Psoas muscle (tissue), 8 donors: ENCODE measurements at regions of chr10 and their contacts with region 1.

Region 1: GRCh38 chr10:77485847-77486246 is 151.8 kb downstream of the KCNMA1 start:
- DNase-seq: no peak
- ATAC-seq: peak in 2 of 4 donors; percentile 34 to 35
- H3K4me3 ChIP-seq: no peak overlapping the region
- H3K27ac ChIP-seq: no peak overlapping the region
- H3K4me1 ChIP-seq: peaks cover 8% of the 10 kb centered on the region
- H3K27me3 ChIP-seq: no peaks in the 10 kb centered on the region
- CTCF ChIP-seq: no peak

Region 2: GRCh38 chr10:77555591-77556212 is 69.9 kb after region 1 on chr10:
- intact Hi-C with region 1: no loop called
- DNase-seq: no peak
- ATAC-seq: peak; percentile 49 to 84 (median 71)
- H3K4me3 ChIP-seq: no peak overlapping the region
- H3K27ac ChIP-seq: peak overlapping the region; percentile 67
- H3K4me1 ChIP-seq: peaks cover 21% of the 10 kb centered on the region
- H3K27me3 ChIP-seq: no peaks in the 10 kb centered on the region
- CTCF ChIP-seq: no peak

Region 3: DNA sequence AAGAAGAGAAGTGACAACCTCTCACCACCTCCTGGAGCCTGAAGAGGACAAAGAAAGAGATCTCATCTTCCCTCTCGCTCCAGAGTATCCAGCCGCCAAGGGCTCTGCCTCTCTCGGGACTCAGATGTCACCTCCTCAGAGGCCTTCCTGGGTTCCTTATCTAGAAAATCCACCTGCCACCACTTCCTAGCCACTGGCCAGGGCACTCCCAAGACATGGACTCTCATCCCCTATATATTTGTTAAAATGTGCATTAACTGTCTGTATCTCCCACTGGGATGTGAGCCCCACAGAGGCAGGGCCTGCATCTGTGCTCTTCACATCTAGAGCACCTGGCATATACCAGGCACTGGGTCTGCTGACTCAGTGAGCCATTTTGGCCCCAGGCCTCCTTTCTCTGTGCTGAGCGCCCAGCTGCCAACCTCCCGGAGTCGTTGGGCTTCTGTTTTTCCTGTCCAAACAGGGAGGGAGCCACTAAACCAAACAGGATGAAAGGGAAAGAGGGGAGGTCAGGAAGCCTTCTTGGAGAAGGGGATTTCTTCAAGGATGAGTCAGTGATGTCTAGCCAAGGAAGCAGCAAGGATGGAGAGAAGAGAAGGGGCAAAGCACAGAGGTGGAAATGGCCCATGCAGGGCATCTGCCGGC is 92.9 kb after region 1 on chr10:
- intact Hi-C with region 1: loop called in 1 of 2 experiments (anchors 5 kb)
- DNase-seq: no peak
- ATAC-seq: peak in 3 of 4 donors; percentile 36 to 66 (median 64)
- H3K4me3 ChIP-seq: no peak overlapping the region
- H3K27ac ChIP-seq: peak overlapping the region; percentile 69
- H3K4me1 ChIP-seq: peaks cover 31% of the 10 kb centered on the region
- H3K27me3 ChIP-seq: no peaks in the 10 kb centered on the region
- CTCF ChIP-seq: no peak